ENCODE measurements at regions of chr22 and their contacts with region 1.

Region 1: DNA sequence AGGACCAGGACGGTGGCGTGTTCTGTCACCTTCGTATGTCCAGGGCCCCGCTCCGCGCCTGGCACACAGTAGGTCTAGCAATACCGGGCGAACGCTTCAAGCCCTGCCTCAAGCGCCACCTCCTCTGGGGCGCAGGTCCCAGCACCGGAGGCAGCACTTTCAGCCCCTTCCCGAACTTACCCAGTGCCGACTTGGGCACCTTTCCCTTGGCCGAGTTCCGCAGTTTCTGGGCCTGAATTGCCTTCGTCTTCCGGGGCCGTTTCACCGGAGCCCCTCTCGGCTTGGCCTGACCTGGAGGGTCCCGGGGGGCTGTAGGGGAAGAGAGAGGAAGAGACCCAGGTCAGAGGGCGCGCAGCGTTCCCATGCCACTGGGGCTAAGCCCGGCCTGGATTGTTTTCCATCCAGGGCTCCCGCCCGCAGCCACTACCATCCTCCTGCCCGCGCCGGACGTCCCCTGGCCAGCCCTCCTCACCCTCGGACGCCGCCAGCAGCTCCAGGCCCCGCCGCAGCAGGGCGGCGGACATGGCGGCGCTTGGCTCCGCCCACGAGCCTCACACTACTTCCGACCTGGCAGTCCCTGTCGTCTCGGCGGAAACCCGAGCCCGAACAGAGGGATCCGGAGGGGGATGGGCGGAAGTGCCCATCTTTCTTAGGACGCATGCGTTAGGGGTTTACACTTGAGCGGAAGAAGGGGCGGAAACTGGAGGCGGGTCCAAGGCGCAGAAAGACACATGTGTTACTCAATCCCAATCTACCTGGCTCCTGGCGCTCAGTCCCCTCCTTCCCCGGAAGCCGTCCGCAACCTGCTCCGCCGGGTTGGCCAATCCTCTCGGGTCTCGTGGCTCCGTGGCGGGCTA is at the start of gene RPS19BP1:
- DNase-seq: peak; percentile 99 to 100 (median 99)
- ATAC-seq: peak; percentile 87 to 89
- H3K4me3 ChIP-seq: peak within 1 kb of the TSS; percentile 70
- H3K27ac ChIP-seq: peak within 1 kb of the TSS; percentile 79
- H3K4me1 ChIP-seq: peaks cover 7% of the 10 kb centered on the region
- H3K27me3 ChIP-seq: no peaks in the 10 kb centered on the region
- total RNA-seq, gene RPS19BP1: 55.1 to 75.5 (median 61.8) TPM

Region 2: DNA sequence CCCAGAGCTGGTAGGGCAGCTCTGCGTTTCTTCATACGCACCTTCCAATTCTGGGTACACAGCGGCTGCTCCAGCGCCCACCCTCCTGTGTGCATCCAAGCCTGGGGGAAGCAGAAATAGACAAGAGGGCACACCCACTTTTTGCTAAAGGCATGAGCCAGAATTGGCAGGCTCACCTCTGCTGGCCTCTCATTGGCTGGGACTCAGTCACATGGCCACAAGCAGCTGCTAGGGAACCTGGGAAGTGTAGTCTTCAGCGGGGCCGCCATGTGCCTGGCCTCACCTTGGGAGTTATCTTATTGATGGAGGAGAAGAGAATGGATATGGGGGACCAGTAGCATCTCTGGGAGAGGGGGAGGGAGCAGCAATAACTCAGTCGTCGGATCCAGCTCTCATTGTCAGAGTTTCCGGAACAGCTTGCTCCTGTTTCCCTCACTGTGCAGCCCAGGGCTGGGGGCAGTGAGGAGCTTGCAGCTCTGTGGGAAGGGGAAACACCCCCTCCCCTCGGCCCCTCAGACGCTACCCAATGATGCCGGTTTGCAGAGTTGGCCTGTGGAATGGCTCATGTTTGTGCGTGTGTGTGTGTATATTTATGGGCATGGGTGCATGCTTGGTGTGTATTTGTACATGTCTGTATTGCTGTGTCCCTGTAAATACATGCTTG is 42.2 kb before region 1 on chr22:
- intact Hi-C with region 1: loop called in 2 of 4 experiments (anchors 5 kb)
- DNase-seq: peak; percentile 81 to 92 (median 89)
- ATAC-seq: peak; percentile 86 to 91
- H3K4me3 ChIP-seq: no peak overlapping the region
- H3K27ac ChIP-seq: no peak overlapping the region
- H3K4me1 ChIP-seq: no peaks in the 10 kb centered on the region
- H3K27me3 ChIP-seq: no peaks in the 10 kb centered on the region

Region 3: GRCh38 chr22:40024201-40025061 is 492.0 kb after region 1 on chr22:
- intact Hi-C with region 1: loop called in 2 of 4 experiments (anchors 5 kb)
- DNase-seq: peak; percentile 68 to 87 (median 83)
- ATAC-seq: peak; percentile 79
- H3K4me3 ChIP-seq: no peak overlapping the region
- H3K27ac ChIP-seq: no peak overlapping the region
- H3K4me1 ChIP-seq: no peaks in the 10 kb centered on the region
- H3K27me3 ChIP-seq: no peaks in the 10 kb centered on the region

Region 4: GRCh38 chr22:40177738-40178416 is 645.4 kb after region 1 on chr22 and contains the start of gene TNRC6B:
- intact Hi-C with region 1: loop called in 1 of 4 experiments (anchors 10 kb)
- DNase-seq: peak in 2 of 3 donors; percentile 59 to 71
- ATAC-seq: peak; percentile 97 to 98
- H3K4me3 ChIP-seq: peak within 1 kb of the TSS; percentile 100
- H3K27ac ChIP-seq: peak within 1 kb of the TSS; percentile 92
- H3K4me1 ChIP-seq: peaks cover 7% of the 10 kb centered on the region
- H3K27me3 ChIP-seq: no peaks in the 10 kb centered on the region
- total RNA-seq, gene TNRC6B: 38.1 to 50.6 (median 39.8) TPM